ENCODE measurements at regions of chr5 and their contacts with region 1.

Region 1: GRCh38 chr5:68067976-68068913 is 147.3 kb upstream of the PIK3R1 start:
- DNase-seq: no peak
- ATAC-seq: no peak
- H3K4me3 ChIP-seq: no peak overlapping the region
- H3K4me3 Mint-ChIP-seq: no peak overlapping the region
- H3K27ac ChIP-seq: no peak overlapping the region
- H3K27ac Mint-ChIP-seq: no peak overlapping the region
- H3K4me1 ChIP-seq: no peaks in the 10 kb centered on the region
- H3K4me1 Mint-ChIP-seq: peaks cover 2% of the 10 kb centered on the region
- H3K27me3 ChIP-seq: no peaks in the 10 kb centered on the region
- H3K27me3 Mint-ChIP-seq: peaks cover 3% of the 10 kb centered on the region
- CTCF ChIP-seq: no peak

Region 2: GRCh38 chr5:67591491-67591890 is 476.8 kb before region 1 on chr5:
- CTCF ChIA-PET with region 1: no interaction called
- POLR2A ChIA-PET with region 1: no interaction called
- intact Hi-C with region 1: no loop called
- DNase-seq: no peak
- ATAC-seq: no peak
- H3K4me3 ChIP-seq: no peak overlapping the region
- H3K4me3 Mint-ChIP-seq: no peak overlapping the region
- H3K27ac ChIP-seq: no peak overlapping the region
- H3K27ac Mint-ChIP-seq: no peak overlapping the region
- H3K4me1 ChIP-seq: no peaks in the 10 kb centered on the region
- H3K4me1 Mint-ChIP-seq: no peaks in the 10 kb centered on the region
- H3K27me3 ChIP-seq: no peaks in the 10 kb centered on the region
- H3K27me3 Mint-ChIP-seq: no peaks in the 10 kb centered on the region
- CTCF ChIP-seq: no peak

Region 3: DNA sequence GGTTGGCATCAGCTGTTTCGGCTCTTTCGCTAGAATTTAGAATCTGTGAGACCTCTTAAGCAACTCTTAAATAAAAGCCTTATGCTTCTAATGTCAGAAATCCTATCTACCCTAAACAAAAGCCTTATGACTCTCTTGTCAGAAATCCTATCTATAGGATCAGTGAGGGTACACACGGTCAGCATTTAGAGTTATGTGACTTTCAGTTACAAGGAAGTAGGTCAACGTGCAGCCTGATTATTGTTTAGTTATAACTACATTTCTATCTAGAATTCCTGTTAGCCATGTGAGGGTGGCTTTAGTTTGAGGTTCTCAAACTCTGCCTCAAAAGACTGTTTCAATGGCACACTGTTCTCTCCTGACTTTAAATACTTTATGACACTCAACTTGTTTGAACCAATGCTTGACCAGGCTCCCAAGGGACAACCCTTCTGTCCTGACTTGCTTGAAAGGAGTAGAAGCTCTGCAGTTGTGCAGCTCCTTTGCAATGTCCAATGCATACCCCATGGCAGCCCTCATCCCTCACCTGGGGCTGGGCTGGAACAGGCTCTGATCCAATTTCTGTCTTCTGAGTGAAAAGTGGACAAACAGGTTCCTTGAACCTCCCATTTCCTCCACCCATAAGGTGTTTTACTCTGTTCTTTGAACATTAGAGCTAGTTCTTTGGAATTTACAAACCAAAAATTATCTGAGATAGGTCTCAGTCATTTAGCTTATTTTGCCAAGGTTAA is 104.3 kb before region 1 on chr5:
- CTCF ChIA-PET with region 1: no interaction called
- POLR2A ChIA-PET with region 1: no interaction called
- intact Hi-C with region 1: loop called (anchors 10 kb)
- DNase-seq: no peak
- ATAC-seq: no peak
- H3K4me3 ChIP-seq: no peak overlapping the region
- H3K4me3 Mint-ChIP-seq: no peak overlapping the region
- H3K27ac ChIP-seq: no peak overlapping the region
- H3K27ac Mint-ChIP-seq: no peak overlapping the region
- H3K4me1 ChIP-seq: no peaks in the 10 kb centered on the region
- H3K4me1 Mint-ChIP-seq: no peaks in the 10 kb centered on the region
- H3K27me3 ChIP-seq: peaks cover 0 to 5% (median 0%) of the 10 kb centered on the region in 4 experiments
- H3K27me3 Mint-ChIP-seq: peaks cover 11% of the 10 kb centered on the region
- CTCF ChIP-seq: no peak

Measured in B cell (primary cell).